ENCODE measurements at regions of chr12 and their contacts with region 1.

Region 1: DNA sequence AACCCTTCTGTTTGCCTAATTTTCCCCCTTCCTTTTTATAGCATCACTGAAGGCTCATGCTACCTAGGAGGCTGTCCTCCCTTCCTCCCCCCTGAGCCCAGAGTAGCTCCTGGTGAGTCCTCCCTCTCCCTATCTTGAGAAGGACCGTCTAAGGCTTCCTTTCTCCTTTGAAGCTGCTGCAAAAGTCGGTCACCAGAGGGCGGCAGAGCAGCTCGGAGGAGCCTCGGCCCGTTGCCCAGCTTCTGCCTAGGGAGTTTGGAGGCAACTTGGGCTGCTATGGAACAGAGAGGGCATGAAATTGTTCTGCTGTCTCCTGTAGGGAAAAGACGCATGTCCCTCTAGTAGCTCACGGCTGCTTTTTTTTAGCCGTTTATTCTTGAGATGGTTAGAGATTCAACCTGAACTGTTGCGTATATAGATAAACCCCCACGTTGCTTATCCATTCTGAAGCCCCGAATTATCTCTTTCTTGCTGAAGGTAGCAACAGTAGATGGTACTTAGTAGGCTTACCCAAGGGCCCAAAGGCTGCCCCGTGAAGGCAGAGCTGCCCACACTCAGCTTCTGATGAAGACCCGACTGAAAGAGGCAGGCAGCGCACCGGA is 5.7 kb downstream of the WNT5B start:
- DNase-seq: peak; percentile 64
- H3K4me3 ChIP-seq: no peak overlapping the region
- H3K27ac ChIP-seq: no peak overlapping the region
- H3K4me1 ChIP-seq: peaks cover 7% of the 10 kb centered on the region
- CTCF ChIP-seq: peak; percentile 92

Region 2: GRCh38 chr12:1391722-1392121 is 243.0 kb before region 1 on chr12:
- CTCF ChIA-PET with region 1: no interaction called
- POLR2A ChIA-PET with region 1: no interaction called
- intact Hi-C with region 1: no loop called
- DNase-seq: no peak
- H3K4me3 ChIP-seq: no peak overlapping the region
- H3K27ac ChIP-seq: no peak overlapping the region
- H3K4me1 ChIP-seq: no peaks in the 10 kb centered on the region
- CTCF ChIP-seq: no peak

Region 3: DNA sequence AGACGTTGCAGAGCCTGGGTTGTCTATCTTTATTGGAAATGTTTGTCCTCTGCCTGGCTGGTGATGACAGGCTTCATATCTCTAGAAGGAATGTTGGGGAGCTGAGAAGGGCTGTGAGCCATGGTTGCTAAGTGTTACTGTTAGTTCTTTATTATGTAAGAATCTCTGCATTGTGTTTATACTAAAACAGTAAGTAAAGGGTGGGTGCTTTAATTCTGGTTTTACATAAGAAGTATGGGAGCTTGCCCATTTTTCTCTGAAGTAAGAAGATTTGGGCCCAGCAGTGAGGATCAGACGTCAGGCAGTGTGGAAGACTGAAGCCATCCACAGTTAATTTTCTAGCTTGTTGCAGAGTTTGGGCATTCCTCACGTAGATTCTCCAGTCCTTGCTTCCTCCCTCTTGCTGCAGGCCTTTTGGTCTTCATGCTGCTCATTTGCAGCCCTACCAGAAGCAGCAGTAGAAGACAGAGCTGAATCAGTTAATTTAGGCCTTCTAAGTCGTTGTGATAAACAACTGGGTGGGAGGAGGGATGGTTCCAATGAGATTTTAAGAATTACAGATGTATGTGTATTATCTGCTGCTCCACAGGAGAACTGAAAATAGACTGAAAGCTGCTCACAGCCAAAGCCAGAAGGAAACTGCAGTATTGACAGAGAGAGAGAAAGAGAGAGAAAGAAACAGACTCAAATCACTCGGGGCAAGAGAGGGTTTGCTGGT is 15.7 kb after region 1 on chr12:
- CTCF ChIA-PET with region 1: interaction called, 8 read pairs
- POLR2A ChIA-PET with region 1: no interaction called
- intact Hi-C with region 1: loop called (anchors 2 kb)
- DNase-seq: no peak
- H3K4me3 ChIP-seq: no peak overlapping the region
- H3K27ac ChIP-seq: no peak overlapping the region
- H3K4me1 ChIP-seq: no peaks in the 10 kb centered on the region
- CTCF ChIP-seq: no peak

Region 4: DNA sequence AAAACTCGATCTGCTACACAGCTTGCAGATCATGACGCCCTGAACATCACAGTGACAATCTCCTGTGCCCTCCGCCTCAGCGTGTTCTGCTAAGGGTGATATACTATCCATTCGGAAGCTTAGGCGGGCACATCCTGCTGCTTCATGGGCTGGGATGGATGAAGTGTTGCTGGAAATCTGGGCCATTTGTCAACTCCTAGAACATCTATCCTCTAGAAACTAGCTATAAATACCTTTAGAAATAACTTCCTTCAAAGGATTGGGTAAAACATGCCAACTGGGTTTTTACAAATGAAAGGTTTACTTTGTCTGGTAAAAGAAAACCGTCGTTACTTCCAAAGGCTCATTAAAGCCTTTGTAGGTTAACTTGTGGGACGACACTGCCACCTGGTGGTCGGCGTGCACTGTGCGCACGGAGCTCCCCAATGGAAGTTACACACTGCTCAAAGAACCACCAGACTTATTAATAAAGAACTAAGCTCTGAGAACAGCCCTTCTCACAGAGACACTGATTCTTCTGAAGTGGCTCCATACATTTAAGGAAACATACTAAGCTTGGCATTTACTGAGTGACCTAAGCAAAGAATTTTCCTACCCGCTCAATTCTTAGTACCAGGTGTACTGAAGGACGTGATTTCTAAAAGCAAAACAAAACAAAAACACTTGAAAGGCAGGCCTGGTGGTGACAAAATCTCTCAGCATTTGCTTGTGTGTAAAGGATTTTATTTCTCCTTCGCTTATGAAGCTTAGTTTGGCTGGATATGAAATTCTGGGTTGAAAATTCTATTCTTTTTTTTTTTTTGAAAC is 305.3 kb after region 1 on chr12:
- CTCF ChIA-PET with region 1: interaction called, 3 read pairs
- POLR2A ChIA-PET with region 1: no interaction called
- intact Hi-C with region 1: loop called (anchors 5 kb)
- DNase-seq: peak; percentile 80
- H3K4me3 ChIP-seq: no peak overlapping the region
- H3K27ac ChIP-seq: no peak overlapping the region
- H3K4me1 ChIP-seq: no peaks in the 10 kb centered on the region
- CTCF ChIP-seq: peak; percentile 100